Vagina (tissue), 2 donors: ENCODE measurements at regions of chr15 and their contacts with region 1.

Region 1: GRCh38 chr15:40857601-40858341 is 13.9 kb downstream of the SPINT1 start:
- DNase-seq: no peak
- H3K4me3 ChIP-seq: no peak overlapping the region
- H3K27ac ChIP-seq: peak overlapping the region; percentile 56
- H3K4me1 ChIP-seq: peaks cover 15% of the 10 kb centered on the region
- H3K27me3 ChIP-seq: no peaks in the 10 kb centered on the region
- CTCF ChIP-seq: peak; percentile 66 to 94 (median 89)
- POLR2A ChIP-seq: no peak

Region 2: GRCh38 chr15:40893733-40894688 is 36.2 kb after region 1 on chr15 and contains the start of gene VPS18:
- intact Hi-C with region 1: loop called (anchors 5 kb)
- DNase-seq: peak; percentile 98
- H3K4me3 ChIP-seq: peak within 1 kb of the TSS; percentile 72 to 89
- H3K27ac ChIP-seq: peak within 1 kb of the TSS; percentile 91
- H3K4me1 ChIP-seq: peaks cover 25% of the 10 kb centered on the region
- H3K27me3 ChIP-seq: no peaks in the 10 kb centered on the region
- CTCF ChIP-seq: peak; percentile 95 to 98 (median 96)
- POLR2A ChIP-seq: peak; percentile 11 to 76
- total RNA-seq, gene VPS18: 21.4 TPM